Lower leg skin (tissue), 4 donors: ENCODE measurements at regions of chr6 and their contacts with region 1.

Region 1: GRCh38 chr6:132483779-132484679 is 28.9 kb downstream of the STX7 start:
- DNase-seq: peak in 1 of 2 donors; percentile 33
- H3K4me3 ChIP-seq: no peak overlapping the region
- CTCF ChIP-seq: peak in 1 of 3 donors; percentile 56
- POLR2A ChIP-seq: no peak

Region 2: DNA sequence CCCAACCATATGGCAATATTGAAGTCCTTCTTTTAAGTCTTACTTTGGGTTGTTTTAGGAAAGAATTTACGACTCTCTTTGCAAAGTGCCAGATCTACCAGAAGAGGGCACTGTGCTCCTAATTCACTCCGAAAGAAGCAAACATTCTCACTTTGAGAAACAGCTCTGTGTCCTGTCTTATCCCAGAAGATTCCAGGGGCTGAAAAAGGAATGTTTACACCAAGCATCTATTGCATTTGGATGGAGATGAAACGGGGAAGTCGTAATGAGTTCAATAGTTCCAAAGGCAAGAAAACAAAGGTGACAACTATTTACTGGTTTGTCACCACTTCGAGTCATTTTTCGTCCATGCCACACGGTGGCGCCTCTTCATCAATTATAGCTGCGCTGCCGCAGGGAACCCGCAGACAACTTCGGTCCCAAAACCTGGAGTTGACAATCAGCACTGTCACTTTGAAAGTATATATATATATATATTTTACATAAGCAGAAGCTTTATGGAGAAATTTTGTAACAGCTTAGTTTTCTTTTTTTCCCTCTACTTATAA is 204.4 kb before region 1 on chr6:
- intact Hi-C with region 1: loop called (anchors 10 kb)
- DNase-seq: peak; percentile 55 to 91
- H3K4me3 ChIP-seq: no peak overlapping the region
- CTCF ChIP-seq: peak in 1 of 3 donors; percentile 88
- POLR2A ChIP-seq: no peak

Region 3: DNA sequence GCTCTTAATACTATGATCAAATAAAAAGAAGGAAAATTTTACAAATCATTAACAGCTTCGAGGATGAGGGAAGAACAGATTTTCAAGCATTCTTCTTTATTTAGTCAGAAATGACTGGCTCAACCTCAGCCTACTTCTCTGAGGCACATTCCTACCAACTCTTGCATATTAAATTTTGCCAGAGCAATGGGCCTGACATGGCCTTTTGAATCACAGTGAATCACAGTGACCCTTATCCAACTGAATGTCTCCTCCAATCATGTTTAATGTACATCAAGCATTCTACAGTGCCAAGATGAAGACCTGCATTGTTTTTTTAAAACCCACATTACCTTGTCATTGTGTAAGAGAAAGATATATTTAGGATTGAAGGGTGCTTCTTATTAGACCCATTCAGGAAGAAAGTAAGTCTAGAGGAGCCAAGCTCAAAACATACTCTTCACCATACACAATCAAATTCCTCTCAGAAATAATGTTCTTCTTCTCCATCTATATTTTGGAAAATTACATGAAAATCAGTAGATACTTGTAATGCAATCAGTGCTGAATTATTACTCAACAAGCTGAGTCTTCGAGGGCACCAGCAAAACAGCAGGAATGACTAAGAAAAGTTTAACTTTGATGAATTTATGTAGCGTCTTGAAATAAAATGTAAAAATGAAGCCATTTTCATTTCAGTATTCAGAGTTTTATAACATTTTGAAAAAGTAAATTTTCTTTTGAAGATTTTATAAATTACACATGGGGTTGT is 38.7 kb before region 1 on chr6:
- intact Hi-C with region 1: no loop called
- DNase-seq: no peak
- H3K4me3 ChIP-seq: no peak overlapping the region
- CTCF ChIP-seq: no peak
- POLR2A ChIP-seq: no peak